ENCODE measurements at regions of chr2 and their contacts with region 1.

Region 1: DNA sequence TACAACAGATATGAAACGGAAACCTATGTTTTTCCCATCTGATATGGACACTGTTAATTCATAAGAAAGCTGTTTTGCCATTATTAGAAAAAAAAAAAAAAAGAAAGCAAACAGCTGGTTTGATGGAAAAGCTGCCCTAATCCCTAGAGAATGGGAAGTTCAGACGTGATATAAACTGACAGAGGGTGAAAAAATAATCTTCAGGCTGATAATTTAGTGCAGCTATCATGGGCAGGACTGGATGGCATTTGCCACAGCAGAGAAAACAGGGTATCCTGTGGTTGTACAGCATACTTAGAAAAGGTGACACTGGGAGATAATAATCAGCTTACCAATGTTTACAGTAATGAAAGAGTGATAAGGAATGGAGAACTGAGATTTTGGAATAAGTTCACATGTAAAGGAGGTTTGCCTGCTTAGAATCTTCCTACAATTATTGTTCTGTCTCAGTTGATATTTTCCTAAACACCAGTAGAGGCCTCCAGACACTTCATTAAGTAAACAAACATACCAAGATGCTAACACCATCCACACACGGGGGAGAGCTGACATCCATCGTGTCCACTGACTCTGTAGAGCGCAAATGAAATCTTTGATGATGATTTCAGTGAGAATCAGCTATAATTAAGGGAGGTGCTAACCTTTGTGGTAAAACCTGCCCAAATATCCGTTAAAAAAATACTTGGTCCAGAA is 211.6 kb upstream of the MMADHC start:
- DNase-seq: peak in 1 of 10 donors; percentile 12
- H3K4me3 ChIP-seq: no peak overlapping the region
- H3K27ac ChIP-seq: no peak overlapping the region
- H3K27me3 ChIP-seq: no peaks in the 10 kb centered on the region
- CTCF ChIP-seq: peak in 46 of 56 donors; percentile 11 to 66 (median 38)

Region 2: DNA sequence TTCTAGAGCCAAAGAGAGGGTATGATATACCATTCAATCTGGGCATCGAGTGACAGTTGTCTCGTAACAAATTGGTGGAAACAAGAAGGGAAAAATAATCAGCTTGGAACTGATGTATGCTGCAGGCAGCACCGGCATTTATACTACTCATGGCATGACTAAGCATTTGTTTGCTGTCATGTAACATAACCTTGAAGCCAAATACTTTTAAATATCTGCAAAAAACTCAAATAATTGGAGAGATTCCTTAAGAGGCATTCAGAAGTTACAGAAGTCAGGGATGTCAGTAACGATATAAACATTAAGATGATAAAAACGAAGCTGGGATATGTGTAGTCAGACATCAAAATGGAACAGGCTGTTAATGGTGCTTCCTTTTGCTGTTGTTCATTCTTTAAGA is 54.3 kb before region 1 on chr2:
- intact Hi-C with region 1: no loop called
- DNase-seq: no peak
- H3K4me3 ChIP-seq: no peak overlapping the region
- H3K27ac ChIP-seq: no peak overlapping the region
- H3K27me3 ChIP-seq: no peaks in the 10 kb centered on the region
- CTCF ChIP-seq: no peak

Region 3: DNA sequence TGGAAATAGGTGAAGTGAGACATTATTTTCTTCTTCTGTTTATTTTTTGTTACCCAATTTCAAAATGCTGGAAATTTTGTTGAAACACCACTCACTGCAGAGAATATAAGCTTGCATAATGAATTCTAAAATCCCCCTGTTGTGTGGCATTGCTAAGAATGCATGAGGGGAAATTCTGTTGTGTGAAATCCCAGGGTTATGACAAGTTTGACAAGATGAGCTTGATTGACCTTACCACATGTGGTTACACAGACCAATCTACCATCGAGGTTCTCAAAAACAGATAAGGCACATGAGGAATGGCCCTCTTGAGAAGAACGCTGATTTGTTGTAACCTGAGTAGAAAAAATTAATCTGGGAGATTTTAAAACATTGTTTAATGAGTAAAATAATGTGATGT is 50.0 kb after region 1 on chr2:
- intact Hi-C with region 1: no loop called
- DNase-seq: no peak
- H3K4me3 ChIP-seq: no peak overlapping the region
- H3K27ac ChIP-seq: no peak overlapping the region
- H3K27me3 ChIP-seq: no peaks in the 10 kb centered on the region
- CTCF ChIP-seq: no peak

Region 4: DNA sequence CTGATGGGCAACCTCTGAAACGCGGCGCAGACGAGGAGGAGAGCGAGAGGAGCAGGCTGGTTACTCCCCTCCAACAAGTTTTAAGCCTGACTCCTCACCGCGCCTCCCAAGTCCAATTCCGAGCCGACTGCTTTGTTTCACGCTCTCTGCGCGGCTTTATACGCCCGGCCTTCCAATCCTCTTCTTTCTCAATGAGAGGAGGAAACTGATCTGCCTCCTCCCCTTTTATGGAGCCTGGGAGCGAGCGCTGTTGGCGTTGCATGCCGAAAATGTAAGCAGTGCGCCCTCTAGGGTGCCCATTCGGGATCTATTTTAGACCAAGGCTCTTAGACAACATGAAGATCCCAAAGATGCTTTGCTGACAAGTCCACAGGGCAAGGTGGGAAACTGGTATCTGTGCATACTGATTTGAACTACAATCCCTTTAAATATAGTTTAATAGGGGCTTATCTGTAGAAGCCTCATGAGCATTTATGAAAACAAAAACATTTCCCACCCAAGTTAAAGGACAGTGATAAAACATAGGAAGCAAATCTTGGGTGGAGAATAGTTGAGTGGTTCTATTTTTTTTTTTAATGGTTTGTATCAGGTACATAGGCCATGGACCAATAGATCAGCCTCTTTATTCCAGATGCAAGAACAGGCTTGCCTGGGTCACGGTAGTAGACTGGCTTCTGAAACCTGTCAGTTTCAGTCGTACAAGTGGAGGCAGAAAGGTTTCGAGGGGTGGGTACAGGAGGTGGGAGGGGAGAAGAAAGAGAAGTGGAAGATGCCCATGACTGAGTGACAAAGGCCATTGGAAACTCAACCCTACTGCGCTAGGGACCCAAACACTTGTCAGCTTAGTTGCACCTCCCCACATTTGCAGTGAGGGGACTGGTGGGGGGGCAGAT is 688.6 kb after region 1 on chr2 and contains the start of gene RND3:
- intact Hi-C with region 1: loop called (anchors 5 kb)
- DNase-seq: peak; percentile 70 to 96 (median 90)
- H3K4me3 ChIP-seq: peak within 1 kb of the TSS; percentile 44 to 90 (median 69)
- H3K27ac ChIP-seq: peak within 1 kb of the TSS in 44 of 59 donors; percentile 11 to 94 (median 82)
- H3K27me3 ChIP-seq: peaks cover 0 to 17% (median 0%) of the 10 kb centered on the region in 45 donors
- CTCF ChIP-seq: peak; percentile 74 to 97 (median 88)
- total RNA-seq, gene RND3: 3.9 to 35.6 (median 10.6) TPM

Measured in dorsolateral prefrontal cortex (tissue), 120 donors.